ENCODE measurements at regions of chr7 and their contacts with region 1.

Region 1: DNA sequence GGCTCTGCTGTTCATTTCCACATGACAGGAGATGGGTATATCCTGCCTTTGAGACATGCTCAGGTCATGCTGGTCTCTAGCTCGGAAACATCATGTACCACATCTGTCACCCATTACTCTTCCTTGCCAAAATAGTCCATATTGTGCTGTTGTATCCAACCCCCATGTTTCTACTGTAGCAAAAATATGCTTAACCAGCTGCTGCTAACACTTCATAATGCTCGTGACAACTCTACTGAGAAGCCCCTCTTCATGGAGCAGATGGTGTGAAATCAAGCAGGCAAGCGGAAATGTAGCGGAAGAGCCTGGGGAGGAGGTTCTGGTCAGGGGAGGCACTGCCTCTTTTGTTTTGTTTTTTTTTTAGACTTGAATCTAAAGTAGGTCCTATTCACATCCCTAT is 82.9 kb downstream of the NPY start:
- DNase-seq: no peak
- H3K4me3 ChIP-seq: no peak overlapping the region
- CTCF ChIP-seq: no peak
- POLR2A ChIP-seq: no peak

Region 2: DNA sequence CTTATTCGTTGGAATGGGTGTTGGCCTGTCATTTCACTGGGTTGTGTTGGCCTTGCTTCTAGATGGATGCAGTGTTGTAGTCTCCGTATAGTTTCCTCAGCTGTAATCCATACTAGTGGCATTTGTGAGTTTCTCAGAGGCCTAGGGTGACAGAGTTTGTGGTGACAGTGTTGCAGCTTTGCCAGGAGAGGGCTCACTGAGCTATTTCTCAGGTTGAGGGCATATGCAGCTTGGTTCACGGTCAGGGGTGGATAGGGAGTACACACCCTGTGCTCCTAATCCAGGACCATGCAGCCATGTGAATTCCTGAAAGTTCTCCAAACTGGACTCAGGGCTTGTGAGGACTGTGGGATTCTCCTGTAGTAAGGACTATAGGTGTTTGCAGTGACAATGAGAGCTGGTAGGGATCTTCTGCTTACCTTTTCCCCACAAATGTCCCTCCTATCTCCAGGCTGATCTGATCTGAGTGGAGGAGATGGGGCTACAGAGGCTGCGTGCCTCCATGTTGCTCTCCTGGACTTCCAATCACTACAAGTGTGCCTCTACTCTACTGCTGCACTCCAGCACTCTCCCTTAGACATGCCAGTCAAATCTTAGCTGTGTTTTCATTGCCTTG is 427.8 kb before region 1 on chr7:
- intact Hi-C with region 1: loop called (anchors 5 kb)
- DNase-seq: no peak
- H3K4me3 ChIP-seq: no peak overlapping the region
- CTCF ChIP-seq: no peak
- POLR2A ChIP-seq: no peak

Region 3: GRCh38 chr7:24318326-24318725 is 48.5 kb before region 1 on chr7:
- intact Hi-C with region 1: no loop called
- DNase-seq: no peak
- H3K4me3 ChIP-seq: no peak overlapping the region
- CTCF ChIP-seq: no peak
- POLR2A ChIP-seq: no peak

Measured in lower leg skin (tissue), 4 donors.